ENCODE measurements at regions of chr11 and their contacts with region 1.

Region 1: GRCh38 chr11:120398132-120398531 is 61.9 kb downstream of the ARHGEF12 start:
- DNase-seq: no peak
- H3K4me3 ChIP-seq: no peak overlapping the region
- H3K27ac ChIP-seq: no peak overlapping the region
- H3K4me1 ChIP-seq: peaks cover 22% of the 10 kb centered on the region
- H3K27me3 ChIP-seq: no peaks in the 10 kb centered on the region
- CTCF ChIP-seq: no peak
- POLR2A ChIP-seq: no peak

Region 2: DNA sequence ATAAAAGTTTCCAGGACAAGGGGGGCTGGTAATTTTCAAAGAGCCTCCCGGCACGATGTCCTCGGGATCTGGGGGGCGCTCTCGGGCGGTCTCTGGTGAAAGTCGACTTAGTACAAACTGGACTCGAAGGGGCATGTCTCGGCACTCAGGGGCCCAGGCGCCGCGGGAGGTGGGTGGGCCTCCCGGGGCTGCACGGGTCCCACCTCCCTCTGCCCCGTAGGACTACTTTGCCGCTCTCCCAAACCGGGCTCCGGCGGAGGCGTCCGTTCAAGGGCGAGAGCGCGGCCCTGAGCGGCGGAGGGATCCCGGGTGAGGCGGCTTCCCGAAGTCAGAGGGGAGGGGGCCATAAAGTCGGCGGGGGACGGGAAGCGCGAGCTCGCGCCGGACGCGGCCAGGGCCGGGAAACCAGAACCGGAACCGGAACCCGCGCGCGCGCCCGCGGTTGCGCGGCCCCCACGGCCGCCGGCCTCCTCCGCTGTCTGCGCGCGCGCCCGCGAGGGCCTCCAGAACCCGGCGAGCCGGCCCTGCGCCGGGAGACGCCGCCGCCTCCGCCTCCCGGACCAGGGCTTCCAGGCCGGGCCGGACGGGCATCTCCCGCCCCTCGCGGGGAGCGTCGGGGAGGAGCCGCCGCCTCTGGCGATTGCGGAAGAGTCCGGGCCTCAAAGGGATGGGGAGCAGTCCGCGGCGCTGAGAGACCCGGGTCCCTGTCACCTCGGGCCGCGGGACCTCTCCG is 62.1 kb before region 1 on chr11 and contains the start of gene ARHGEF12:
- intact Hi-C with region 1: loop called (anchors 5 kb)
- DNase-seq: peak in 1 of 2 donors; percentile 96
- H3K4me3 ChIP-seq: peak within 1 kb of the TSS; percentile 80 to 94
- H3K27ac ChIP-seq: peak within 1 kb of the TSS; percentile 98
- H3K4me1 ChIP-seq: peaks cover 62% of the 10 kb centered on the region
- H3K27me3 ChIP-seq: no peaks in the 10 kb centered on the region
- CTCF ChIP-seq: peak in 1 of 3 experiments; percentile 6
- POLR2A ChIP-seq: peak in 1 of 2 donors; percentile 84
- total RNA-seq, gene ARHGEF12: 106 TPM

Region 3: GRCh38 chr11:120441592-120441991 is 43.5 kb after region 1 on chr11:
- intact Hi-C with region 1: no loop called
- DNase-seq: no peak
- H3K4me3 ChIP-seq: no peak overlapping the region
- H3K27ac ChIP-seq: no peak overlapping the region
- H3K4me1 ChIP-seq: no peaks in the 10 kb centered on the region
- H3K27me3 ChIP-seq: no peaks in the 10 kb centered on the region
- CTCF ChIP-seq: no peak
- POLR2A ChIP-seq: no peak

Region 4: DNA sequence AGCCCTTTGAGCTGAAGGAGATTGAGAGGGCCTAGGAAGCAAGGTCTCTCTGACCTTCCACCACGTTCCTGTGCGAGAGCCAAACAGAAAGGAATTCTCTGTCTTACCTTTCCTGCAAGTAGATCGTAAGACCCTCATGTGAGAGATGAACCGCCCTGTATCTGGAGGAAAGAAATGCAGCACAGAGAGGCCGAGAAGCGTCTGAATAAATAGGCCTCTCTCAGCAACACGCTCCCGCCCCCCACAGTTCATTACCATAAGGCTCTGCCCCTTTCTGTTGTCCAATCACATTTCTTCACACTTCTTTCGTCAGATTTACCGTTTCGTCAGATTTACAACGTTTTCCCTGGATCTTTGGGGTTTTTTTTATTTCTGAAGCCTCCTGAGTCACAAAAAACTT is 1627.6 kb after region 1 on chr11:
- intact Hi-C with region 1: loop called (anchors 5 kb)
- DNase-seq: no peak
- H3K4me3 ChIP-seq: no peak overlapping the region
- H3K27ac ChIP-seq: no peak overlapping the region
- H3K4me1 ChIP-seq: no peaks in the 10 kb centered on the region
- H3K27me3 ChIP-seq: no peaks in the 10 kb centered on the region
- CTCF ChIP-seq: no peak
- POLR2A ChIP-seq: no peak

Measured in vagina (tissue), 2 donors.